Activated B cell treated with CpG ODN at 0.5 μM for 24 hours (primary cell): ENCODE measurements at regions of chr2 and their contacts with region 1.

Region 1: DNA sequence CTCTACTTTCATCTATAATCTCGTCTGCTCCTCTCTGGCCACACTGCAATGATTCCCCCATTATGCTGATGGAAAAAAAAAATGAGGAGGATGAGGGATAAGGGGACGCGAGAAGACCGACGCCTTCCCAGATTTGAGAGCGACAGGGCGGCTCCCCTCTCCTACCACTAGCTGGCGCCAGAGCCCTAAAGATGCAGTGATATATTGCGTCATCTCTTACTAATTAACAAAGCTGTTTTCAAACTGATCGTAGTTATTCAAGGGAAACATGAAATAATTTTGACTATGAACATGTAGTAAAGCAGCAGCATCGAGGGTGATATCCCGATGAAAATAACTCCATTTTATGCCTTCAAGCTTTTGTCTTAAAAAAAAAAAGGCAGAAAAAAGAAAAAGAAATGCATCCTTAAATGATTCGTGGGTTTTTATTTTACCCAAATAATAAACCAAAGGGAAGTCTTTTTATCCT is 48.0 kb upstream of the HNRNPA3 start:
- DNase-seq: peak; percentile 65
- ATAC-seq: peak; percentile 56
- H3K4me3 Mint-ChIP-seq: no peak overlapping the region
- H3K27ac Mint-ChIP-seq: no peak overlapping the region
- H3K4me1 Mint-ChIP-seq: peaks cover 5% of the 10 kb centered on the region
- H3K27me3 Mint-ChIP-seq: peaks cover 2% of the 10 kb centered on the region
- CTCF ChIP-seq: peak; percentile 89

Region 2: DNA sequence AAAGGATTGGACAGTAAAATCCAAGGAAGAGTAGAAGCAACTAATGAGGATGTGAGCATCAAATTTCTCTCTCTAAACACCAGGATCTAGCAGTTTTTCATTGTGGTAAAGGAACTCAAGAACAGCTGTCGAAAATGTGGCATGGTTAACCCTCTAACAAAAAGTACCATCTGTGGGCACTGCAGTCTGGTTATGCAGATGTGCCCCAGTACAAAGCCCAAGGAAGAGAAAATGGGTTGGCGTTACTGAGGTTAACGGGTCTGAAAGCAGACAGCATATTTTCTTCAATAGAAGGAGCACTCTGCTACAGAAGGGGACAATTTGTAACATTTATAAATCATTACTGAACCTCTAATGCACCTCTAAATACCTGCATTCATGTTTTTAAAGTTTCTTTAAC is 205.0 kb before region 1 on chr2:
- CTCF ChIA-PET with region 1: no interaction called
- POLR2A ChIA-PET with region 1: no interaction called
- intact Hi-C with region 1: no loop called
- DNase-seq: no peak
- ATAC-seq: no peak
- H3K4me3 Mint-ChIP-seq: no peak overlapping the region
- H3K27ac Mint-ChIP-seq: no peak overlapping the region
- H3K4me1 Mint-ChIP-seq: no peaks in the 10 kb centered on the region
- H3K27me3 Mint-ChIP-seq: peaks cover 19% of the 10 kb centered on the region
- CTCF ChIP-seq: no peak

Region 3: DNA sequence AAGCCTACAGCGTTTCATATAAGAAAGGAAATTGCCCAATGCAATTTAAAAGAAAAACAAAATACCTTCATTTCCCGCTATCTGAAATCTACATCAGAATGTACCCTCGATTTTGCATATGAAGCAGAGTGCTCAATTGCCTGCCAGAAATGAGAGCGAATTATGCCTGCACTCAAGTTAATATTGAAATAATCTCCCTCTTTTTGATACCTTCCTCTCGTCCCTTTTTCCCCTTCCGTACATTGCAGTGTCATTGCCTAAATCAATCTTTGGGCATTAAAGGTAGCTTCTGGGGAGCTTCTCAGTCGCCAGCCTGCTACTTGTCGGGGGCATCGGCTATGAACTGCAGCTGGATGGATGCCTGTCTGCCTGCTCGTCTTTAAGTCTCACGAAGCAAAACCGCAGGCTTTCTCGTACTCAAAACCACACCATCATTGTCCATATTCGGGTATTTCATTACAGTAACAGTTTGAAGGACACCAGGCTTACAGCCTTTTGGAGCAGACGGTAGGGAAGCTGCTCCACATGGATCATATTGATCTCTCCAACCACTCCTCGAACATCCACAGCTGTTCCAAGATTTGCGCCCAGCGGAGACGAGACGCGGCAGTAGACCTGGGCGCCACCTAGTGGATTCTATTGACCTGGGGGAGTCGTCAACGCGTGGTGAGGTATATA is 16.0 kb before region 1 on chr2:
- CTCF ChIA-PET with region 1: interaction called, 64 read pairs
- POLR2A ChIA-PET with region 1: interaction called, 13 read pairs
- intact Hi-C with region 1: no loop called
- DNase-seq: peak; percentile 46
- ATAC-seq: peak; percentile 84
- H3K4me3 Mint-ChIP-seq: peak overlapping the region; percentile 89
- H3K27ac Mint-ChIP-seq: peak overlapping the region; percentile 36
- H3K4me1 Mint-ChIP-seq: peaks cover 15% of the 10 kb centered on the region
- H3K27me3 Mint-ChIP-seq: peaks cover 14% of the 10 kb centered on the region
- CTCF ChIP-seq: peak; percentile 36

Region 4: DNA sequence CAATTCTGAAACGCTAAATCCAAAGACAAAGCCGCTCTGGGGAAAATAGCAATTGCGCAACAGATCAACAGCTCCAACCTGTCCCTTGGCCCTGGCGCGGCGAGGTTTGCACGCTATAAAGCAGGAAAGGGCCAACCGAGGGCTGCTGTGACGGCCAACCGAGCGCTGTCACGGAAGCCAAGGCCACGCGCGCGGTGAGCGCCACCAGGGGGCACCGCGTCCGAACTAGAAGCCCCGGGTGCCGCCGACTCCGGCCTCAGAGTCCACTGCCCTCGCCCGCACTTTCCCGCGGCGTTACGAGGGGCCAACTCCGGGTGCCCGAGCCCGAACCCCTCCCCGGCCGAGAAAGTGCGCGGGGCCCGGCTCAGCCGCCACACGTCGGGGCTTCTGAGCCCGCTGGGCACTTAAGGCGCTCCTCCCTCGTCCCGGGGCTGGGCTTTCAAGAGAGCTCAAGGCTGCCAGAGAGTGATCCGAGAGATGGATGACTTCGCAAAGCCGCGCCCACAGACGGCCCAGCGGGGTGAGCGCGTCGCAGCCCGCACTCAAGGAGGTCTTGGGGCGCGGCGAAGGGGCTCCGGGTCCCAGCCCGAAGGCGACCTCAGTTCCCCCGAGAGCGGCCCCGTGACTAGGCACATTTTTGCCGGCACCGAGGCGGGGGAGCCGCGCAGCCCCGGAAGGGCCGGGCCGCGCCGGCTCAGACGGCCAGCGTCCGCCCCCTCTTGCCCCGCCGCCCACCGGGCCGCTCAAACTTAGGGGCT is 99.0 kb after region 1 on chr2:
- CTCF ChIA-PET with region 1: interaction called, 143 read pairs
- POLR2A ChIA-PET with region 1: interaction called, 255 read pairs
- intact Hi-C with region 1: loop called (anchors 1 kb)
- DNase-seq: peak; percentile 97
- ATAC-seq: peak; percentile 53
- H3K4me3 Mint-ChIP-seq: peak overlapping the region; percentile 97
- H3K27ac Mint-ChIP-seq: peak overlapping the region; percentile 100
- H3K4me1 Mint-ChIP-seq: peaks cover 59% of the 10 kb centered on the region
- H3K27me3 Mint-ChIP-seq: no peaks in the 10 kb centered on the region
- CTCF ChIP-seq: no peak

Region 5: DNA sequence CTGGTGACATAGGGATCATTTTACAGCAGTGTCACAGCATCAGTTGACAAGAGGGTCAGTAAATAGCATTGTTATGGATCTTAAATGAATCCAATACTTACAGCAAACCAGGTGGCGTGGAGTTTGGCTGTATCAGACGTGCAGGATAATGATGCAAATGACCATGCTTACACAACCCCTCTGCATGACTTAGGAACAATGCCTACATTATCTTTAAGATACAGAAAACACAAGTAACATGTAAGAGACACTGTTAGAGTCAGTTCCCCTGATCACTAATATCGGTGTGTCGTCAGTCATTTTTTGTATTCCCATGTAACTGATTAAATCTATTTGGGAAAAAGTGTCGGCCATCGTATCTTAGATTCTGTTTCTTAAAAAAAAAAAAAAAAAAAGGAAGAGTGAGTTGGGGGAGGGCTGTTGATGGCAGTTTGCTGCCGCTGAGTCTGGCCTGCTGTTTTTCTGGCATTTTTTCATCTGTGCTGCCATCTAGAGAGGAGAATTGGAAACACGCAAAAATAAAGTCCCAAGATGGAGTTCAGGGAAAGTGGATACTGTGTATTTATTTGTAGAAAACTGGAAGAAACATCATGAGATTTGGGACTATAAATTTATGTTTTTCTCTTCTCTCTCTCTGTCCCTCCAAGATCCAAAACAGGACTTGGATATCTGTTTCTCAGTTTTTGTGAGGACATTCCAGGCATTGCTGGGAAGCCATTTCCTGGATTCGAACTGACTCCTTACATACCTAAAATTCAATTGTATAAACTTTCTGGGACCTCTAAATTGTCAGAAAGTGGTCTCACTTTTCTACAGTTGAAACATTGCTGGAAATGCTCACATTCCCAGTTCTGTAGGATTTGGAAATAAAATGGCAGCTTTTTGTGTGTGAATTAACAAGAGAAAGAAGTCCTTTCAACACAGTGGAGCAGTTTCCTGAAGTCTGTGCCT is 167.7 kb after region 1 on chr2:
- CTCF ChIA-PET with region 1: interaction called, 166 read pairs
- POLR2A ChIA-PET with region 1: interaction called, 11 read pairs
- intact Hi-C with region 1: loop called (anchors 1 kb)
- DNase-seq: no peak
- ATAC-seq: peak; percentile 94
- H3K4me3 Mint-ChIP-seq: peak overlapping the region; percentile 46
- H3K27ac Mint-ChIP-seq: peak overlapping the region; percentile 50
- H3K4me1 Mint-ChIP-seq: peaks cover 9% of the 10 kb centered on the region
- H3K27me3 Mint-ChIP-seq: no peaks in the 10 kb centered on the region
- CTCF ChIP-seq: no peak

Region 6: GRCh38 chr2:177419274-177419673 is 254.7 kb after region 1 on chr2:
- CTCF ChIA-PET with region 1: interaction called, 47 read pairs
- POLR2A ChIA-PET with region 1: interaction called, 8 read pairs
- intact Hi-C with region 1: loop called (anchors 1 kb)
- DNase-seq: no peak
- ATAC-seq: no peak
- H3K4me3 Mint-ChIP-seq: no peak overlapping the region
- H3K27ac Mint-ChIP-seq: no peak overlapping the region
- H3K4me1 Mint-ChIP-seq: peaks cover 5% of the 10 kb centered on the region
- H3K27me3 Mint-ChIP-seq: no peaks in the 10 kb centered on the region
- CTCF ChIP-seq: no peak

Region 7: DNA sequence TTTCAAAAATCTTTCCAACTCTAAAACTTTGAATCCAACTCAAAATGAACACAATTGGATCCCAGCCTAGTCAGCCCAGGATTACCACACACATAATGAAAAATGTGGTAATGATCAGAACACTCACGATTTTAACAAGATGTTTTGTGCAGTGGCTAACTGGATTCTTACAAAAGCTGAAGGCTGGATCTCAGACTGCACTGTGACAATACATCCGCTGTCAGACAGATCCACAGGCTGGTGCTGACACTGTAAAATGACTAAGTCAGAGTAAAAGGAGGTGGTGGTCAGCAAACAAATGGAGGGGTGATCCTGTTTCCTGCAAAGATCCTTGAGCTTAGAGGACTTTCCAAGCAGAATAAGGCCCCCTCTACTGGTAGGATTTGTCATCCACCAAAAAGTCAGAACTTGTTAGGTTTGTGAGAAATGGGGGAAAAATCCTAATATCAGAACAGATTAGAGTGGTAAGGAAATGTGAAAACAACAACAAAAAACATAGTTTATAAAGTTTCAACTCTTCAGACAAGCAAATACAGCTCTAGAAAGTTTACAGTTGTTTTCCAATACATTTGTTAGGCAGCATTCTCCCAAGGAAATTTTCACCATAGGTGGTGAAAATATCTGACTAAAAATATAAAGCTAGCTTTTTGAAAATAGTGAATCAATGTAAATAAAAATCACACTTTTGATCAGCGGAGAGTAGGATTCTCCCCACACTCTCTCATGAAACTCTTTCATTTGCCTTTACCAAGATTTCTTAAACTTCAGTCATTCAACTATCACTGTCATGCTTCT is 439.9 kb after region 1 on chr2:
- CTCF ChIA-PET with region 1: interaction called, 18 read pairs
- POLR2A ChIA-PET with region 1: no interaction called
- intact Hi-C with region 1: loop called (anchors 1 kb)
- DNase-seq: no peak
- ATAC-seq: no peak
- H3K4me3 Mint-ChIP-seq: no peak overlapping the region
- H3K27ac Mint-ChIP-seq: no peak overlapping the region
- H3K4me1 Mint-ChIP-seq: no peaks in the 10 kb centered on the region
- H3K27me3 Mint-ChIP-seq: no peaks in the 10 kb centered on the region
- CTCF ChIP-seq: no peak

Region 8: DNA sequence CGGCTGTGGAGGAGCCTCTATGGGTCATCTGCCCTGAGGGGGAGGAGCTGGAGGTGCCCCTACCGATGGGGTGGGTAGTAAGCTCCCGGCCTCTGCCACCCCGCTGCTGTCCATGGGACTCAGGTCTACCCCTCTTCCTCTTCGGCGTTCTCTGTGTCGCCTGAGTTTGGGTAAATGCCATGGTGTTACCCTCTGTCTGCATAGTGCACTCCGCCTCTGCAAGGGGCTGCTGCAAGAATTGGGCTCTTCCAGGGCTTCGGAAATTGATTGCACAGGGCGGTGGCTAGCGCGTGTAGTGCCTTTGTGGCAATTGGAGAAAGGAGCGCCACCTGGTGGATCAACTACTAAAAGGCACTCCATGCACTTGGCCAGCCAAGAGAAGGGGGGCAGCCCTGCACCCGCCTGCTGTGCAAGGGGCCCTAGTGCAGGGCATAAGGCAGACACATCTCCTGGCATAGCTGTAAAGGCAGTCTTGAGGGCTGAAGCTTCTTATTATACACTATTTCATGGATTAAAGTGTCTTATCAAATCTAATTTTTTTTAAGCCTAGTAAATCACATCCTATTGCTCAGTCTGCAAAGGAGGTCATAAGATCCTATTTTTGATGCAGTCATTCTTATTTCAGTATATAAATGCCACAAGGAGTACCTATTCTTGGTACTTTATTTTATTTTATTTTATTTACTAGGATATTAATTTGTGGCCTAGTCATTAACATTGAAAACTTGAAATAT is 599.1 kb after region 1 on chr2:
- CTCF ChIA-PET with region 1: interaction called, 17 read pairs
- POLR2A ChIA-PET with region 1: no interaction called
- intact Hi-C with region 1: loop called (anchors 1 kb)
- DNase-seq: peak; percentile 54
- ATAC-seq: peak; percentile 94
- H3K4me3 Mint-ChIP-seq: peak overlapping the region; percentile 64
- H3K27ac Mint-ChIP-seq: no peak overlapping the region
- H3K4me1 Mint-ChIP-seq: peaks cover 10% of the 10 kb centered on the region
- H3K27me3 Mint-ChIP-seq: peaks cover 21% of the 10 kb centered on the region
- CTCF ChIP-seq: peak; percentile 58